Mammary epithelial cell (primary cell): ENCODE measurements at regions of chr3 and their contacts with region 1.

Region 1: GRCh38 chr3:177359593-177360357 is 162.5 kb upstream of the TBL1XR1 start:
- DNase-seq: peak; percentile 97
- H3K4me3 ChIP-seq: peak overlapping the region in 2 of 3 experiments; percentile 26 to 35
- H3K27ac ChIP-seq: peak overlapping the region; percentile 57
- H3K4me1 ChIP-seq: peaks cover 44% of the 10 kb centered on the region
- H3K27me3 ChIP-seq: no peaks in the 10 kb centered on the region
- CTCF ChIP-seq: no peak

Region 2: GRCh38 chr3:177126015-177126773 is 233.6 kb before region 1 on chr3:
- CTCF ChIA-PET with region 1: interaction called, 12 read pairs
- dilution Hi-C with region 1: no loop called
- in situ Hi-C with region 1: no loop called
- intact Hi-C with region 1: no loop called
- DNase-seq: peak; percentile 90
- H3K4me3 ChIP-seq: no peak overlapping the region
- H3K27ac ChIP-seq: no peak overlapping the region
- H3K4me1 ChIP-seq: peaks cover 21% of the 10 kb centered on the region
- H3K27me3 ChIP-seq: no peaks in the 10 kb centered on the region
- CTCF ChIP-seq: no peak

Region 3: DNA sequence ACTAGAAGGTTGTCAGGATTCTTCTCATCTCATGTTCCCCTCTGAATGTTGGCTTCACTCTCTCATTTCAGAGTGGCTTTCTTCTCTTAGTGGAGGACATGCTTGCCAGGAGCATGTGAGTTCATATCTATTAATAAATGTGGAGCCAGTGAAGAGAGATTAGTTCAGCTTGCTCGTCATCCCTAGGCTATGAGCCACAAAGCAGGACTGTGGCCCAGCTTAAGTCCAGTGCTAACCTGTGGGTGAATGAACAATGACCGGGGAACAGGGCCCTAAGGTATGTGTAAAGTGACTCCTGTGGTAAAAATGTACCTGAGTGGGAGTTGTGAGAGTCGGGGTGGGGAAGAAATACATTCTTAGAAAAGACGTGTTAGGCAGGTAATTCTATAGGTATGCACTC is 65.6 kb before region 1 on chr3:
- CTCF ChIA-PET with region 1: no interaction called
- dilution Hi-C with region 1: no loop called
- in situ Hi-C with region 1: no loop called
- intact Hi-C with region 1: loop called (anchors 2 kb)
- DNase-seq: peak; percentile 96
- H3K4me3 ChIP-seq: no peak overlapping the region
- H3K27ac ChIP-seq: peak overlapping the region; percentile 98
- H3K4me1 ChIP-seq: peaks cover 23% of the 10 kb centered on the region
- H3K27me3 ChIP-seq: no peaks in the 10 kb centered on the region
- CTCF ChIP-seq: no peak

Region 4: DNA sequence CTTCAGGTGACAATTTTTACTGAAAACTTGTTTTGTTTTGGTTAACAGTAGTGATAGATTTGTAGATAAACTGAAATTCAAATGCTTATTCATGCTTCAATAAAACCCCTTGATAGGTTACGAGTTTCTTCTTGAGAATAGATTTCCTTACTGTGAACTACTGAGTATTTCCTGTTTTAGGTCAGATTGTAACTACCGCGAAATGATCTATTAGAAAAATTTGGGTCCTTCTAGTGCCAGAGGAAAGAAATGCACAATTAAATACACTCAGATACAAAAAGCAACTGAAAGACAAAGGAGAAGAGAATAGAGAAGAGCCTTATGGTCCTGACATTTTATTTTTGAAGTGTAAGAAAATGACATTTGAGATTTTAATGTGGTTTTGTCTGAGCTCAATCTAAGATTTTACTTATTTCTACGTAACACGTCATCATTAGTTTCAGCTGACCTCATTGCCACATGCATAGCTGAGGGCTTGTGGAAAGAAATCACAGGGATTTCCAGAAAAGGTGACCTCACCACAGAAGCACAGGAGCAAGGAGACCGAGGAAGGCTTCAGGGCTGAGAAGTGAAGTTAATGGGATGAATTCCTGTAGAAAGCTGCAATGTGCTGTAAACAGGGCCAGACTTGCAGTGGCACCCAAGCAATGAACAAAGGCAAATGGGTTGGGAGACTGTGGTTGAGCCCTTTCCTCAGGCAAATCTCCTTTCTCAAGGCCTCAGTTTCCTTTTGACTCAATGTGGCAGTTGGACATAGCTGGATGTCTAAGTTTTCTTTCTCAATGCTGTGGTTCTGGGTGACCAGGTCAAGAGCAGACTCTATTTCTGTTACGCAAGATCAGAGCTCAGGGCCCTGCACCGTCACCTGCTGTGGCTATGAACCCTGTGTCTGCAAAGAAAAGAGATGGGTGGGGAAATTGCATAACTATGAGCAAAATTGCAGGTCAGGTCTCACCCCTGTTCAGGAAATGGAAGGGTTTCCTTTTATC is 89.5 kb after region 1 on chr3:
- CTCF ChIA-PET with region 1: no interaction called
- dilution Hi-C with region 1: no loop called
- in situ Hi-C with region 1: no loop called
- intact Hi-C with region 1: loop called (anchors 1 kb)
- DNase-seq: peak; percentile 100
- H3K4me3 ChIP-seq: no peak overlapping the region
- H3K27ac ChIP-seq: peak overlapping the region; percentile 99
- H3K4me1 ChIP-seq: peaks cover 51% of the 10 kb centered on the region
- H3K27me3 ChIP-seq: no peaks in the 10 kb centered on the region
- CTCF ChIP-seq: no peak

Region 5: GRCh38 chr3:177665122-177665808 is 305.5 kb after region 1 on chr3:
- CTCF ChIA-PET with region 1: no interaction called
- dilution Hi-C with region 1: no loop called
- in situ Hi-C with region 1: no loop called
- intact Hi-C with region 1: loop called (anchors 1 kb)
- DNase-seq: no peak
- H3K4me3 ChIP-seq: no peak overlapping the region
- H3K27ac ChIP-seq: no peak overlapping the region
- H3K4me1 ChIP-seq: no peaks in the 10 kb centered on the region
- H3K27me3 ChIP-seq: no peaks in the 10 kb centered on the region
- CTCF ChIP-seq: no peak

Region 6: GRCh38 chr3:178385280-178385952 is 1025.6 kb after region 1 on chr3:
- CTCF ChIA-PET with region 1: interaction called, 3 read pairs
- dilution Hi-C with region 1: no loop called
- in situ Hi-C with region 1: no loop called
- intact Hi-C with region 1: loop called (anchors 10 kb)
- DNase-seq: peak; percentile 29
- H3K4me3 ChIP-seq: no peak overlapping the region
- H3K27ac ChIP-seq: no peak overlapping the region
- H3K4me1 ChIP-seq: peaks cover 8% of the 10 kb centered on the region
- H3K27me3 ChIP-seq: no peaks in the 10 kb centered on the region
- CTCF ChIP-seq: peak; percentile 77 to 95